ENCODE measurements at regions of chr11 and their contacts with region 1.

Region 1: GRCh38 chr11:14746857-14747395 is 103.3 kb downstream of the PDE3B start:
- DNase-seq: peak in 2 of 9 experiments; percentile 20
- ATAC-seq: peak; percentile 39
- H3K4me3 ChIP-seq: no peak overlapping the region
- H3K4me3 Mint-ChIP-seq: no peak overlapping the region
- H3K27ac ChIP-seq: peak overlapping the region in 1 of 2 experiments; percentile 5
- H3K27ac Mint-ChIP-seq: peak overlapping the region; percentile 53
- H3K4me1 ChIP-seq: peaks cover 41% of the 10 kb centered on the region
- H3K4me1 Mint-ChIP-seq: peaks cover 61% of the 10 kb centered on the region
- H3K27me3 ChIP-seq: no peaks in the 10 kb centered on the region
- H3K27me3 Mint-ChIP-seq: no peaks in the 10 kb centered on the region
- CTCF ChIP-seq: no peak

Region 2: GRCh38 chr11:14698771-14699170 is 48.2 kb before region 1 on chr11:
- CTCF ChIA-PET with region 1: no interaction called
- POLR2A ChIA-PET with region 1: no interaction called
- intact Hi-C with region 1: loop called in 1 of 2 experiments (anchors 5 kb)
- DNase-seq: peak in 1 of 9 experiments; percentile 27
- ATAC-seq: peak; percentile 56
- H3K4me3 ChIP-seq: no peak overlapping the region
- H3K4me3 Mint-ChIP-seq: peak overlapping the region; percentile 42
- H3K27ac ChIP-seq: no peak overlapping the region
- H3K27ac Mint-ChIP-seq: peak overlapping the region; percentile 66
- H3K4me1 ChIP-seq: peaks cover 49% of the 10 kb centered on the region
- H3K4me1 Mint-ChIP-seq: peaks cover 60% of the 10 kb centered on the region
- H3K27me3 ChIP-seq: no peaks in the 10 kb centered on the region
- H3K27me3 Mint-ChIP-seq: no peaks in the 10 kb centered on the region
- CTCF ChIP-seq: no peak

Measured in CD8-positive, alpha-beta T cell (primary cell).